WTC11 (cell line): ENCODE measurements at regions of chr2 and their contacts with region 1.

Region 1: GRCh38 chr2:195672668-195673067 is 15.6 kb downstream of the SLC39A10 start:
- DNase-seq: no peak
- ATAC-seq: peak; percentile 80
- H3K4me3 Mint-ChIP-seq: no peak overlapping the region
- H3K27ac Mint-ChIP-seq: no peak overlapping the region
- H3K4me1 Mint-ChIP-seq: peaks cover 18% of the 10 kb centered on the region
- H3K27me3 Mint-ChIP-seq: no peaks in the 10 kb centered on the region
- CTCF ChIP-seq: 0 out of 2 replicates have a peak, but pooled peaks have one; percentile 21

Region 2: DNA sequence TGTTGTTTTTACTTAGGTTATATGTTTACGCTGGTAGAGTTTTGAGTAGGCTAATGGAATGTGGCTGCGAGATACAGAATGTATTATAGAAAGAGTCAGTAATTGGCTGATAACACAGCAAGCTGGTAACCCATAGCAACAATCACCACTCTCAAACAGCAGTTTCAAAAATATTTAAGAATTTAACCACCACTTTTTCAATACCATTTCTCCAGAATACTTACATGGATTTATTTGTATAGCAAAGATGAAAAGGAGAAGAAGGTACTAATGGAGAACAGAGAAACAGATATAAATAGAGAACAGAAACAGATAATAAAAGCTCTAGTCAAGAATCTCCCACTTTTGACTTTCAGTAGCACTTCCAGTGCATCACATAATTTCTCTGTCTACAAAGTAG is 203.9 kb before region 1 on chr2:
- CTCF ChIA-PET with region 1: no interaction called
- POLR2A ChIA-PET with region 1: no interaction called
- DNase-seq: no peak
- ATAC-seq: no peak
- H3K4me3 Mint-ChIP-seq: no peak overlapping the region
- H3K27ac Mint-ChIP-seq: no peak overlapping the region
- H3K4me1 Mint-ChIP-seq: no peaks in the 10 kb centered on the region
- H3K27me3 Mint-ChIP-seq: no peaks in the 10 kb centered on the region
- CTCF ChIP-seq: no peak

Region 3: GRCh38 chr2:195498176-195498575 is 174.5 kb before region 1 on chr2:
- CTCF ChIA-PET with region 1: interaction called, 11 read pairs
- POLR2A ChIA-PET with region 1: no interaction called
- DNase-seq: peak; percentile 50
- ATAC-seq: peak; percentile 50
- H3K4me3 Mint-ChIP-seq: no peak overlapping the region
- H3K27ac Mint-ChIP-seq: no peak overlapping the region
- H3K4me1 Mint-ChIP-seq: no peaks in the 10 kb centered on the region
- H3K27me3 Mint-ChIP-seq: no peaks in the 10 kb centered on the region
- CTCF ChIP-seq: no peak